Heart right ventricle (tissue), 16 donors: ENCODE measurements at regions of chr2 and their contacts with region 1.

Region 1: GRCh38 chr2:207334624-207335371 is 169.1 kb upstream of the KLF7 start:
- DNase-seq: peak; percentile 60 to 80
- ATAC-seq: peak; percentile 54 to 88 (median 85)
- H3K4me3 ChIP-seq: peak overlapping the region in 9 of 10 donors; percentile 2 to 41 (median 31)
- H3K27ac ChIP-seq: peak overlapping the region; percentile 60 to 96 (median 92)
- H3K4me1 ChIP-seq: peaks cover 0 to 82% (median 50%) of the 10 kb centered on the region in 9 donors
- H3K27me3 ChIP-seq: no peaks in the 10 kb centered on the region
- CTCF ChIP-seq: peak in 2 of 9 donors; percentile 8 to 14

Region 2: DNA sequence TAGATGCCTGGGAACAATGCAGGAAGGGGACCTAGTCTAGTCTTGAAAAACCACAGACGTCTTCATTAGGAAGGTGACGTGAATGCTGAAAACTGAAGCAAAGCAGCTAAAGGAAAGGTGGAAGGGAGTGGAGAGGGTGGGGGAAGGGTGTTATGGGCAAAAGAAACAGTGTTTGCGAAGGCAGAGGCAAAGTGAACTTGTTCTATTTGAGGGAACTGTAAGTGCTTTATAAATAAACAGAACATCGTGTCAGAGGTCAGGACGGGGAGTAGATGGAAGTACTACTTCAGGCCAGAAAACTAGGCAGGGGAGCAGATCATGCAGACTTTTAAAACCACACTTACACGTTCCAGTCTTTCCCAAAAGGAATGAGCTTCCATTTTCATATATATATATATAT is 511.6 kb before region 1 on chr2:
- intact Hi-C with region 1: loop called in 1 of 10 experiments (anchors 5 kb)
- DNase-seq: peak in 1 of 2 donors; percentile 46
- ATAC-seq: peak; percentile 83 to 99 (median 94)
- H3K4me3 ChIP-seq: peak overlapping the region in 1 of 10 donors; percentile 14
- H3K27ac ChIP-seq: peak overlapping the region in 8 of 10 donors; percentile 38 to 72 (median 66)
- H3K4me1 ChIP-seq: peaks cover 0 to 20% (median 5%) of the 10 kb centered on the region in 9 donors
- H3K27me3 ChIP-seq: no peaks in the 10 kb centered on the region
- CTCF ChIP-seq: no peak

Region 3: DNA sequence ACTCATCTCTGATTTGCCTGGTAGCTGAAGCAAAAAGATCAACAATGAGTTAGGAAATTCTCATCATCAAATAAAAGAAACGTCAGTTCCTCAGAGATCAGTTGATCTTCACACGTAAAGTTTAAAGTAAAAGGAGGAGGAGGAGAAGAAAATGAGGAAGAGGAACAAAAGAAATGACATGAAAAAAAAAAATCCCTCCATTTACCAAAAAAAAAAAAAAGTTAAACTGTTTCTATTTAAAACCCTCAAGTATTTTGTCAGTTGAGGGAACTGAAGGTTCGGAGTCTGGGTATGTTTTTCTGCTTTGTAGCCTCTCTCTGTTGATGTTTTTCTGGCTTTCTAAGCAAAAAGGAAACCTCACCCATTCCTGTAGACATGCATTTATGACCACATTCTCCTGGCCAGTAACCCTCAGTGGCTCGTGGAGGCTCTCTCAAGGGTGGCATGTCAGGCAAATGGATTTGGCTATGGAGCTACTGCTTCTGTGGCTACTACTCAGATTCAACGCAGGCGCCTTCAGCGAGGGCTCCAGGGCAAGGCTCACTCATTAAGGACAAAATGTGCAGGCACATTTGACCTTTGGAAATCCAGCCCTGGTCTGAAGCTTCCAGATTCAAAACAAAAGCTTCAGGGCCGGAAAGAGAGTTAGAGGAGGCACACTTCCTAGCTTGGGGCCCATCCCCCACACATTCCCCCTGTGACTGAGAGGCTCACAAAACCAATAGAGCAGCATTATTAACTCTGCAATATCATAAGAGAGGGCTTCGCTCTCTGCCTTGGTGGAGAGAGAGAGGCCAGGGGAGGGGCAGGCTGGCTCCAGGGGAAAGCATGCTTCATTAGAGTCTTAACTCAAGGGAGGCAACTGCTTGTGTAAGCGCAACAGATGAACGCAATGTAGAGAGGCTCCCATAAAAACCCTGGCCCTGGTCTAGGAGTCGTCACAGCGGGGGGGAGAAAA is 191.3 kb before region 1 on chr2:
- intact Hi-C with region 1: loop called in 1 of 10 experiments (anchors 2 kb)
- DNase-seq: peak; percentile 72 to 80
- ATAC-seq: peak; percentile 77 to 91 (median 87)
- H3K4me3 ChIP-seq: peak overlapping the region in 8 of 10 donors; percentile 6 to 44 (median 28)
- H3K27ac ChIP-seq: peak overlapping the region; percentile 69 to 94 (median 88)
- H3K4me1 ChIP-seq: peaks cover 29 to 100% (median 97%) of the 10 kb centered on the region in 9 donors
- H3K27me3 ChIP-seq: no peaks in the 10 kb centered on the region
- CTCF ChIP-seq: no peak

Region 4: DNA sequence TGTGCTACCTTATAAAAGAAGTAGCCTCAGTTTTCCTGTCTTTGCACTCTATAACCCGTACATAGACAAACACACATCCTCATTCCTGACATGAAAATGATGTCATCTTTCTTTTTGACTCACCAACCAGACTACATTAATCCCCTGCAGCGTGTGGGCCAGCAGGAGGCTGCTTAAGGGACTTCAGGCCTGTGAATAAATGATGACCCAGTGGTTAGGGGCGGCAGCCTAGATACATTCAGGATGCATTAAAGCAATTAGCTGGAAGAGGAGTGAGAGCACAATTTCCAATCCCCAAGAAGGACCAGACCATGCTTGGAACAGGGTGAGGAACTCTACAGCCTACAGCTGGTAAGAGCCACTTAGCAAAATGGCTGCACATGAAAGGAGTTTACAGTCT is 111.7 kb before region 1 on chr2:
- intact Hi-C with region 1: loop called in 1 of 10 experiments (anchors 10 kb)
- DNase-seq: no peak
- ATAC-seq: no peak
- H3K4me3 ChIP-seq: no peak overlapping the region
- H3K27ac ChIP-seq: no peak overlapping the region
- H3K4me1 ChIP-seq: peaks cover 0 to 41% (median 38%) of the 10 kb centered on the region in 9 donors
- H3K27me3 ChIP-seq: no peaks in the 10 kb centered on the region
- CTCF ChIP-seq: no peak

Region 5: GRCh38 chr2:207258263-207258991 is 76.4 kb before region 1 on chr2:
- intact Hi-C with region 1: loop called in 1 of 10 experiments (anchors 2 kb)
- DNase-seq: peak; percentile 34 to 71
- ATAC-seq: peak; percentile 78 to 90 (median 86)
- H3K4me3 ChIP-seq: no peak overlapping the region
- H3K27ac ChIP-seq: peak overlapping the region in 9 of 10 donors; percentile 39 to 69 (median 65)
- H3K4me1 ChIP-seq: peaks cover 15 to 58% (median 40%) of the 10 kb centered on the region in 9 donors
- H3K27me3 ChIP-seq: no peaks in the 10 kb centered on the region
- CTCF ChIP-seq: no peak